Activated CD4-positive, alpha-beta memory T cell treated with anti-CD3 and anti-CD28 coated beads for 36 hours (primary cell): ENCODE measurements at regions of chr1 and their contacts with region 1.

Region 1: DNA sequence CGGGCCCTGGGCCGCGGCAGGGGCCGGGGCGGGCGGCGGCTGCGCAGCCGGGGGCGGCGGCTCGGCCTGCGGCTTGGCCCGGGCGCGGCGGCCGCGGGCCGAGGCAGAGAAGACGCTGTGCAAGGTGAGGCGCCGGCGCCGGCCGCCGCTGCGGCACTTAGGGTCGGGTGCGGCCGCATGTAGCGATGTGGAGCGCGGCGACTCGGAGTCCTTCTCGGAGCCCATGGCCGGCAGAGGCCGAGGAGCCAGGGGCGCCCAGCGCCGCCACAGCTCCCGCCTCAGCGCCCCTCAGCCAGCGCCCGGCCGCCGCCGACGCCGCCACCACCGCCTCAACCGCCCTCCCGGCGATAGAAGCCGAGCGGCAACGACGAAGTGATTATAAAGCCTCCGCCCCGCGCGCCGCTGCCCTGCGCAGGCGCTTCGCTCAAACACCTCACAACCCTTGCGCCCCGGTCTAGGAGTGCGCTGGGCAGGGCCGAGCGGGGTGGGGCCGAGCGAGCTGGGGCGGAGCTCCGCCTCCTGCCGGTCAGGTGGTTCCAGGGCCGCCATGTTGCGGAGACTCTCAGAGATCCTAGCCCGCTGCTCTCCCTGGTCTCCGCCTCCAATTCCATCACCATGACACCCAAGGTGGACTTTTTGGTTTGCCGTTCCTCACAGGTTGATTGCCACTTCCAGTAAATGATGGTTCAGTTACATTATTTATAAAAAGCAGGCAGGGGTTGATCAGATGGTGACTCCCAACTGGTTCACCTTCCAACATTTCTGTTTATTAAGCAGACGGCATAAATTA is at the start of gene RNF19B:
- DNase-seq: peak; percentile 98
- H3K4me3 Mint-ChIP-seq: peak within 1 kb of the TSS; percentile 83
- H3K27ac Mint-ChIP-seq: peak within 1 kb of the TSS; percentile 80
- H3K4me1 Mint-ChIP-seq: peaks cover 61% of the 10 kb centered on the region
- H3K27me3 Mint-ChIP-seq: no peaks in the 10 kb centered on the region
- total RNA-seq, gene RNF19B: 72.4 to 72.8 TPM

Region 2: DNA sequence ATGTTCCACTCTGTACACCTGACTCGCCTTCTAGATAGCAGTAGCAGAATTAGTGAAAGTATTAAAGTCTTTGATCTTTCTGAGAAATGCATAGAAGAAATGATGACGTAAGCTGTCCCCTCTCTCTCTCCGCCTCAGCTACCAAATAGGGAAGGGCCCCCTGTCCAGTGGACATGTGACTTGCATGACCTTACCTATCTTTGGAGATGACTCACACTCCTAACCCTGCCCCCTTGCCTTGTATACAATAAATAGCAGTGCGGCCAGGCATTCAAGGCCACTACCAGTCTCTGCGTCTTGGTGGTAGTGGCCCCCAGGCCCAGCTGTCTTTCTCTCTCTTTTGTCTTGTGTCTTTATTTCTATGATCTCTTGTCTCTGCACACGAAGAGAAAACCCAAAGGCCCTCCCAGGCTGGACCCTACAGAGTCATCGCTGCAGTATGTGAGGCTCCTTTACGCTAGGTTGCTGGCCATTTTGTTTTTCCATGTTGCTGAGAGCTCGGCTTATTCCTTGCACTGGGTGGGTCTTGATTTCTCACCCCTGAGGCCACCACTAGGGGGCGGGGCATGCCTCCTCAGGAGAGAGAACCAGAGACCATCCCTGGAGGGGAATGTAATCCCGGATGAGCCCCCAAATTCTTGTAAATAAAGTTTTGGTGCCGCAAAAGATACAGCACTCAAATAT is 515.7 kb before region 1 on chr1:
- CTCF ChIA-PET with region 1: no interaction called
- POLR2A ChIA-PET with region 1: no interaction called
- intact Hi-C with region 1: no loop called
- DNase-seq: peak; percentile 25
- H3K4me3 Mint-ChIP-seq: no peak overlapping the region
- H3K27ac Mint-ChIP-seq: no peak overlapping the region
- H3K4me1 Mint-ChIP-seq: no peaks in the 10 kb centered on the region
- H3K27me3 Mint-ChIP-seq: peaks cover 20% of the 10 kb centered on the region

Region 3: DNA sequence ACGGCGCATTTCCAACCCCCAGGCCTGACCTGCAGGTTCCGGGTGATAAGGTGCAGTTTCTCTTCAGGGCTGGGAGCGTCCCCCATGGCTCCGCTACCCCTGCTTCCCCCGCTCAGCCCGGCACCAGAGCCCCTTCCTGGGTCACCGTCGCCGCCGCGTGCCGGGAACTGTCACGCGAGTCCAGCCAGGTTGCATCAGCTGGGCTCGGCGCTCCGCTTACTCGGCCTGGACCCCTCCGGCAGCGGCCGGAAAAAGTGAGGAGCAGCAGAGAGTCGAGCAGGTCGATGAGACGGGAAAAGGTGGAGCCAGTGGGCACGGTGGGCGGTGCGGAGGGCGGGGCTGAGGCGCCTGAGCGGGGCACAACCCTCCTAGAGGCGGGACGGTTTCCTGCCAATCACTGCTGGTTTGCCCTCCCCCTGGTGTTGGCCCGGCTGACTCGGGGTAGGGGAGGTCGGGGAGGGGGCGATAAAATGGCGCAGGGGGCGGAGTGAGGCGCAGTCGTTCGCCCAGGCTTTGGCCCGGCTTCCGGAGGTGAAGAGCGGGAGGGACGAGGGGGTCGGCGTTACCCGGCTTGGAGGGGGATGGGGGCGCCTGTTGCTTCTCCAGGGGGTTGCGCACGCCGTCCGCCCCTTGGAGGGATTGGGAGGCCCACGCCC is 147.4 kb before region 1 on chr1 and contains the starts of genes S100PBP and YARS1:
- CTCF ChIA-PET with region 1: no interaction called
- POLR2A ChIA-PET with region 1: no interaction called
- intact Hi-C with region 1: loop called (anchors 1 kb)
- DNase-seq: peak; percentile 100
- H3K4me3 Mint-ChIP-seq: peak within 1 kb of the TSS; percentile 99
- H3K27ac Mint-ChIP-seq: peak within 1 kb of the TSS; percentile 94
- H3K4me1 Mint-ChIP-seq: peaks cover 50% of the 10 kb centered on the region
- H3K27me3 Mint-ChIP-seq: no peaks in the 10 kb centered on the region
- total RNA-seq, gene S100PBP: 30.4 to 32.7 TPM
- total RNA-seq, gene YARS1: 208 to 213 TPM

Region 4: DNA sequence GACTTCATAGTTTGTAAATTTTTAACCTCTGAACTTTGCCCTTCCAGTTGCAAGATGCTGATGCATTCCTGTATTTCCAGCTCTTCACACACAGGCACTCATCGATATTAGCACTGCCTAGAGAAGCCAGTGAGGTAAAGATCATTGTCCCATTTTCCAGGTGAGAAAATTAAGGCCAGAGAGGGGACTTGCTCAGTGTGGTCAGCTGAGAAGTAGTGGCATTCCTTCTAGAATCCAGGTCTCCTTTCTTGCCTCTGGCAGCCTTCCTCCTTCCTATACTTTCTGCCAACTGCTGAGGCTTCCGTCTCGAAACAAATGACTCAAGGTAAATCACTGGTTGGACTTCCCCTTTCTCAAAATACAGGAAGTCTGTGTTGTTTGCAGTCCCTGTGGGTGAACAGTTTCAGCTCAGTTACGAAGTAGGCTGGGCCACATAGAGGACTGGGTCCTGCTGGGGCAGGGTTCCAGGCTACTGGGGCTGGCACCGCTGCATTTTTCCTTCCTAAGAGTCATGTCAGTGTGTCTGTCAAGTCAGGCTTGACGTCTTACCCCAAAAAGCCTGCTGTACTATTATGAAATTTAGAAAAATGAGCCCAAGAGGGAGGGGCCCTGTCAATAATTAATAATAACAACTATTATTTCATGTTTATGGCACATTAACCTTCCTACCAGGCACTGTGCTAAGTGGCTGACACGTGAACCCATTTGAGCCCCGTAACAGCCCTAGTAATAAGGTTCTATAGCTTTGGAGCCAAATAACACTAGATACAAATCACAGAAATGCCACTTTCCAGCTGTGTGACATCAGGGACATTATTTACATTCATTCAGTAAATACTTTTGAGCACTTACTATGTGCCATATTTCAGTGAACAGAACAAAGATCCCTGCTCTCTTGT is 16.6 kb after region 1 on chr1:
- CTCF ChIA-PET with region 1: interaction called, 5 read pairs
- POLR2A ChIA-PET with region 1: interaction called, 39 read pairs
- intact Hi-C with region 1: loop called (anchors 1 kb)
- DNase-seq: peak; percentile 84
- H3K4me3 Mint-ChIP-seq: peak overlapping the region; percentile 53
- H3K27ac Mint-ChIP-seq: peak overlapping the region; percentile 88
- H3K4me1 Mint-ChIP-seq: peaks cover 57% of the 10 kb centered on the region
- H3K27me3 Mint-ChIP-seq: no peaks in the 10 kb centered on the region

Region 5: DNA sequence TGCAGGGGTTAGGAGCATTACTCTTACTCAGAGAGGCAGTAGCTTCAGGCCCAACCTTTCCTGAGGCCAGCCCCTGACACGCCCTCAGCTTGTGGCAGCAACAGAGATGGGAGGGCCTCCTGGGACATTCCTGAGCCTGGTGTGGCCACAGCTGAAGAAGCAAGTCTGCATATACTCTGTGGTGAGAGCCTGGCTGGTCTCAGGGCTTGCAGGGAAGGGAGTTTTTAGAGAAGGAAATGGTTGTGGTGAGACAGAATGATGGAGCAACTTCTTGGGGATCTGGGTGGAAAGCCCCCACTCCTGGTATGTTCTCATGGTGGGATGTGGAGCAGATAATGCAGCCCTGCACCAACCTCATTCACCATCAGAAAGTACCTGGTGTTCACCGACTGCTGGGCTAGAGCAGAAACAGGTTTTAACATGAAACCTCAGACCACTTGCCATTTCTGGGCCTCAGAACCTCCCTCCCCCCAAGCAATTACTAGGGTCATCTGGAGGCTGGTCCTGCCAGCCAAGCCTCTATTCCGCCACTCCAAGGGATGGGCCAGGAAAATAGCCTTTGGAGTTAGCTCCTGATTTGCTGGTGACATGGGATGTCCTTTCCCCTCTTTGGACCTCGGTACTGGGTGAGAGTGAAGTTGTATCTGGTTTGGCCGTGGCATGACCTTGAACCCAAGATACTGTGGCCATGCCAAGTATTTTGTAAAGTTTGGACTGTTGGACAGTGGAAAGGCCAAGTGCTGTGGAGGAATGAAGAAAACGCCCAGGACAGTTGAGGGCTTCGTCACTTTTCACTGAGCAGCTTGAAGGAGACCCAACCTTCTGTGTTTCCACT is 28.1 kb after region 1 on chr1:
- CTCF ChIA-PET with region 1: no interaction called
- POLR2A ChIA-PET with region 1: interaction called, 23 read pairs
- intact Hi-C with region 1: loop called (anchors 1 kb)
- DNase-seq: peak; percentile 91
- H3K4me3 Mint-ChIP-seq: peak overlapping the region; percentile 32
- H3K27ac Mint-ChIP-seq: peak overlapping the region; percentile 93
- H3K4me1 Mint-ChIP-seq: peaks cover 62% of the 10 kb centered on the region
- H3K27me3 Mint-ChIP-seq: no peaks in the 10 kb centered on the region

Region 6: GRCh38 chr1:33007190-33008050 is 42.8 kb after region 1 on chr1:
- CTCF ChIA-PET with region 1: interaction called, 3 read pairs
- POLR2A ChIA-PET with region 1: interaction called, 12 read pairs
- intact Hi-C with region 1: no loop called
- DNase-seq: peak; percentile 40
- H3K4me3 Mint-ChIP-seq: no peak overlapping the region
- H3K27ac Mint-ChIP-seq: no peak overlapping the region
- H3K4me1 Mint-ChIP-seq: peaks cover 41% of the 10 kb centered on the region
- H3K27me3 Mint-ChIP-seq: no peaks in the 10 kb centered on the region

Region 7: GRCh38 chr1:33055210-33056008 is 90.8 kb after region 1 on chr1:
- CTCF ChIA-PET with region 1: interaction called, 17 read pairs
- POLR2A ChIA-PET with region 1: no interaction called
- intact Hi-C with region 1: no loop called
- DNase-seq: peak; percentile 49
- H3K4me3 Mint-ChIP-seq: no peak overlapping the region
- H3K27ac Mint-ChIP-seq: no peak overlapping the region
- H3K4me1 Mint-ChIP-seq: peaks cover 3% of the 10 kb centered on the region
- H3K27me3 Mint-ChIP-seq: peaks cover 5% of the 10 kb centered on the region